Activated CD8-positive, alpha-beta memory T cell treated with anti-CD3 and anti-CD28 coated beads, Interleukin-2, amount 10 ng/mL, durations not matched to agents 7 days and 5 days (primary cell): ENCODE measurements at regions of chr11 and their contacts with region 1.

Region 1: GRCh38 chr11:123301696-123302400 is 106.8 kb upstream of the CLMP start:
- DNase-seq: peak; percentile 78
- ATAC-seq: peak; percentile 91
- H3K4me3 Mint-ChIP-seq: peak overlapping the region; percentile 49
- H3K27ac Mint-ChIP-seq: peak overlapping the region; percentile 61
- H3K4me1 Mint-ChIP-seq: peaks cover 54% of the 10 kb centered on the region
- H3K27me3 Mint-ChIP-seq: no peaks in the 10 kb centered on the region

Region 2: GRCh38 chr11:123357961-123358841 is 56.4 kb after region 1 on chr11:
- CTCF ChIA-PET with region 1: interaction called, 22 read pairs
- DNase-seq: peak; percentile 76
- ATAC-seq: peak; percentile 91
- H3K4me3 Mint-ChIP-seq: peak overlapping the region; percentile 86
- H3K27ac Mint-ChIP-seq: peak overlapping the region; percentile 80
- H3K4me1 Mint-ChIP-seq: peaks cover 52% of the 10 kb centered on the region
- H3K27me3 Mint-ChIP-seq: peaks cover 27% of the 10 kb centered on the region

Region 3: GRCh38 chr11:123478352-123478987 is 176.6 kb after region 1 on chr11:
- CTCF ChIA-PET with region 1: interaction called, 44 read pairs
- DNase-seq: peak; percentile 47
- ATAC-seq: peak; percentile 45
- H3K4me3 Mint-ChIP-seq: peak overlapping the region; percentile 57
- H3K27ac Mint-ChIP-seq: peak overlapping the region; percentile 78
- H3K4me1 Mint-ChIP-seq: peaks cover 71% of the 10 kb centered on the region
- H3K27me3 Mint-ChIP-seq: no peaks in the 10 kb centered on the region

Region 4: GRCh38 chr11:123580557-123581275 is 278.9 kb after region 1 on chr11:
- CTCF ChIA-PET with region 1: interaction called, 11 read pairs
- DNase-seq: peak; percentile 77
- ATAC-seq: peak; percentile 82
- H3K4me3 Mint-ChIP-seq: no peak overlapping the region
- H3K27ac Mint-ChIP-seq: no peak overlapping the region
- H3K4me1 Mint-ChIP-seq: peaks cover 31% of the 10 kb centered on the region
- H3K27me3 Mint-ChIP-seq: no peaks in the 10 kb centered on the region